HEK293T (cell line): ENCODE measurements at regions of chr12 and their contacts with region 1.

Region 1: GRCh38 chr12:6554168-6555017 is 1.4 kb downstream of the IFFO1 start:
- DNase-seq: peak; percentile 80

Region 2: GRCh38 chr12:6540181-6540877 is 14.1 kb before region 1 on chr12:
- CTCF ChIA-PET with region 1: interaction called, 72 read pairs
- POLR2A ChIA-PET with region 1: interaction called, 77 read pairs
- DNase-seq: no peak

Region 3: GRCh38 chr12:6570264-6570887 is 16.0 kb after region 1 on chr12:
- CTCF ChIA-PET with region 1: interaction called, 13 read pairs
- POLR2A ChIA-PET with region 1: interaction called, 34 read pairs
- DNase-seq: peak; percentile 69

Region 4: DNA sequence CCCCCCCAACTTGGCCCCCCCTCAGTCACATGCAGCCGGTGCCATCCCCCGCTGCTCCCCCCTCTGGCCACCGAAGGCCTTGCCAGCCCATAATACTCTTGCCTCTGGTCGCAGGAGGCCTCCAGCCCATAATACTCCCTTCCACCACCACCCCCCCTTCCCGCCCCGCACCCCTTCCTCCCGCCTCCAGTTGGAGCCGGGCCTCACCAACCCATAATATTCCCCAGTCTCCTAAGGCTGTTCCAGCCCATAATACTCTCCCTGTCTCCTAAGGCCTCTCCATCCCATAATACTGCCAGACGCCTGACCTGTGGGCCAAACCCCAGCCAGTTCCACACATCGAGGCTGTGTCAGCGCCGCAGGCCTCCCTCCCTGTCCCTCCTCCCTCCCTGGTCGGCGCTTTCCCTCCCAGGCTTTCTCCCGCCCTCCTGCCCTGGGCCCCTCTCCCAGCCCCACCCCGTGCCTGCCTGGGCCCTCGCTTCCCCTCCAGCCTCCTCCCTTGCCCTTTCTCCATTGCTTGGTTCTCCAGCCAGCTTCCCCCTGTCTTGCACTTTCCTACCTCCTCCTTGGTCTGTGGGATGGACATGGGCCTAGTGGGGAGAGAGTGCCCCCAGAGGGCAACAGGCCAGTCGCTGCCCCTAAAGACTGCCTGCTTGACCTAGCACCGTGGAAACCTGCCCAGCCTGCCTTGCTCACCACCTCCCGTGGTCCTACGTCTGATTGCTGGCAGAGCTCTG is 59.6 kb after region 1 on chr12:
- CTCF ChIA-PET with region 1: no interaction called
- POLR2A ChIA-PET with region 1: no interaction called
- DNase-seq: peak; percentile 87